ENCODE measurements at regions of chr18 and their contacts with region 1.

Region 1: DNA sequence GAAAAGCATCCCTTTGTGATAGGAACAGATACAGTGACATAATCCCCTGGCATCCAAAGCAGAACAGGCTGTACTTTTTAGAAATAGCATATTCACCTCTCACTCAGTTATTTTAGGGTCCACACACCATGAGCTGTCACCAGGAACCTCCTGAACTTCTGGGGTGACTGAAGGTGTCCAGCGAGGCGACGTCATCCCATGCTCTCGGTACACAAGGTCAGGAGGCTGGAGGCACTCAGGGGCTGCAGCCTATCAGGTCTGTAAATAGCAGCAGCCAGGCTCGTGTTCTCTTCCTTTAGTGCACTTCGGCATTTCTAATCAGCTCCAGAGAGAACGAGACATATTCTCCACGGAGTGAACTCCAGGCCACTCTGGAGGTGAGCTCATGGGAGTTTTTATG is 98.3 kb downstream of the GATA6 start:
- DNase-seq: peak; percentile 85
- ATAC-seq: peak; percentile 88

Region 2: DNA sequence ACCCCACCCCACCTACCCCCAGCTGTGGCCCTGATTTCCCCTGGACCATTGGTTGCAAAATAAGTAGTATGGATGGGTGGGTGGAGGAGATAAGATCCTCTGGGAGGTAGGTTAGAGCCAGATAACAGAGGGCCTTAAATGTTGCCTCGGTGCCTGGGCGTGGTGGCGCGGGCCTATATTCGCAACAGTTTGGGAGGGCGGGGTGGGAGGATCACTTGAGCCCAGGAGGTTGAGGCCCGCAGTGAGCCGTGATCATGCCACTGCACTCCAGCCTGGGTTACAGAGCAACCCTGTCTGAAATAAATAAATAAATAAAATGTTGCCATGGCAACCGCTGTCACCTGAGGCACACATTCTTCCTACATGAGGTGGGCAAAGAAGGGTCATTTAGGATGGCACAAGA is 201.6 kb before region 1 on chr18:
- intact Hi-C with region 1: no loop called
- DNase-seq: no peak
- ATAC-seq: no peak

Region 3: GRCh38 chr18:22348521-22349316 is 81.0 kb after region 1 on chr18:
- intact Hi-C with region 1: loop called (anchors 5 kb)
- DNase-seq: peak; percentile 88
- ATAC-seq: peak; percentile 81

Region 4: DNA sequence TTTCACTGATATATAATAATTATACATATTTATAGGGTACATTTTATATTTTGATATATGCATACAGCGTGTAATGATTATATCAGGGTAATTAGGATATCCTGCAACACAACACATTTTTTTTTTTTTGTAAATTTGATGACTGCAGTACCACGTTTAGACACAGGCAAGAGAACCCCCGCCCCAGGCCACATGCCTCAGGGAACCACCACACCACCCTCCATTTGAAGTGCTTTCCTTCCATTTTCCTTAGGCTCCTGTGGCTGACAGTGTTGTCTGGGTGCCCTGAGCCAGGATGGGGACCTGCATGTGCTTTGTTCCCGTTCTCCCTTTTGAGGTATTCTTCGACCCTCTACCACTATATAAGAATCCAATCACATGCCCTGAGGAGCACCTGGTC is 311.6 kb after region 1 on chr18:
- intact Hi-C with region 1: no loop called
- DNase-seq: no peak
- ATAC-seq: no peak

Measured in Right ventricle myocardium superior (tissue), 1 donor.